Caco-2 (cell line): ENCODE measurements at regions of chr14 and their contacts with region 1.

Region 1: GRCh38 chr14:66403183-66403582 is 83.0 kb upstream of the CCDC196 start:
- DNase-seq: peak in 1 of 2 experiments; percentile 40
- H3K4me3 ChIP-seq: no peak overlapping the region
- H3K4me3 Mint-ChIP-seq: no peak overlapping the region
- H3K27ac Mint-ChIP-seq: no peak overlapping the region
- H3K4me1 ChIP-seq: no peaks in the 10 kb centered on the region
- H3K4me1 Mint-ChIP-seq: no peaks in the 10 kb centered on the region
- H3K27me3 ChIP-seq: no peaks in the 10 kb centered on the region
- H3K27me3 Mint-ChIP-seq: no peaks in the 10 kb centered on the region
- CTCF ChIP-seq: peak in 1 of 2 experiments; percentile 60

Region 2: GRCh38 chr14:66662374-66662773 is 259.2 kb after region 1 on chr14:
- CTCF ChIA-PET with region 1: no interaction called
- POLR2A ChIA-PET with region 1: no interaction called
- intact Hi-C with region 1: loop called (anchors 10 kb)
- DNase-seq: peak in 1 of 2 experiments; percentile 36
- H3K4me3 ChIP-seq: no peak overlapping the region
- H3K4me3 Mint-ChIP-seq: no peak overlapping the region
- H3K27ac Mint-ChIP-seq: no peak overlapping the region
- H3K4me1 ChIP-seq: no peaks in the 10 kb centered on the region
- H3K4me1 Mint-ChIP-seq: no peaks in the 10 kb centered on the region
- H3K27me3 ChIP-seq: no peaks in the 10 kb centered on the region
- H3K27me3 Mint-ChIP-seq: no peaks in the 10 kb centered on the region
- CTCF ChIP-seq: peak; percentile 40 to 58